HepG2 (cell line): ENCODE measurements at regions of chr22 and their contacts with region 1.

Region 1: GRCh38 chr22:33539902-33540751 is 380.1 kb downstream of the LARGE1 start:
- DNase-seq: peak; percentile 100
- ATAC-seq: peak; percentile 93
- H3K4me3 ChIP-seq: peak overlapping the region in 2 of 3 experiments; percentile 29 to 44; a peak in 2 of 6 replicates
- H3K27ac ChIP-seq: peak overlapping the region; percentile 99
- H3K4me1 ChIP-seq: peaks cover 86% of the 10 kb centered on the region
- H3K27me3 ChIP-seq: no peaks in the 10 kb centered on the region
- CTCF ChIP-seq: peak; percentile 1; the same call in 1 of the 2 replicates
- EP300 ChIP-seq: peak; percentile 97 to 99
- POLR2A ChIP-seq: peak in 1 of 2 experiments; percentile 78; a peak in 2 of 4 replicates
- RAD21 ChIP-seq: 0 out of 2 replicates have a peak, but pooled peaks have one; percentile 26

Region 2: DNA sequence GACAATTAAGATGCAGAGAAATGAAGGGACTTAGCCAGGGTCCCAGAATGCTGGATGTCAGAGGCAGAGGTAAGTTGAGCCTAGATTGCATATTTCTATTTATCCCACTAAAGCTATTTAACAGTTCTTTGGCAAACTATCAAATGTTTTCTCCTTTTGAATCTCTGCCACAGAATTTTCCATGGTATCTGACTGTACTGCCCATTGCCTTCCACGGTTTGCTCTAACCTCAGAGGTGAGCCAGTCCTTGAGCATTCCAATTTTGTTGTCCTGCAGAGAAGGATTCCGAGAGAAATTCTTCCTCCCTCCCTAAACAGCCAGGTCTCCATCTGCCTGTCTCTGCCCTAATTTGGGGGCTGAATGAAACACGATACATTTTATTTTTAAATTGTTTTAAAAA is 113.7 kb before region 1 on chr22:
- CTCF ChIA-PET with region 1: no interaction called
- POLR2A ChIA-PET with region 1: no interaction called
- in situ Hi-C with region 1: no loop called
- intact Hi-C with region 1: no loop called
- DNase-seq: no peak
- ATAC-seq: no peak
- H3K4me3 ChIP-seq: no peak overlapping the region
- H3K27ac ChIP-seq: no peak overlapping the region
- H3K4me1 ChIP-seq: peaks cover 9% of the 10 kb centered on the region
- H3K27me3 ChIP-seq: no peaks in the 10 kb centered on the region
- CTCF ChIP-seq: no peak
- EP300 ChIP-seq: no peak
- POLR2A ChIP-seq: no peak
- RAD21 ChIP-seq: no peak

Region 3: DNA sequence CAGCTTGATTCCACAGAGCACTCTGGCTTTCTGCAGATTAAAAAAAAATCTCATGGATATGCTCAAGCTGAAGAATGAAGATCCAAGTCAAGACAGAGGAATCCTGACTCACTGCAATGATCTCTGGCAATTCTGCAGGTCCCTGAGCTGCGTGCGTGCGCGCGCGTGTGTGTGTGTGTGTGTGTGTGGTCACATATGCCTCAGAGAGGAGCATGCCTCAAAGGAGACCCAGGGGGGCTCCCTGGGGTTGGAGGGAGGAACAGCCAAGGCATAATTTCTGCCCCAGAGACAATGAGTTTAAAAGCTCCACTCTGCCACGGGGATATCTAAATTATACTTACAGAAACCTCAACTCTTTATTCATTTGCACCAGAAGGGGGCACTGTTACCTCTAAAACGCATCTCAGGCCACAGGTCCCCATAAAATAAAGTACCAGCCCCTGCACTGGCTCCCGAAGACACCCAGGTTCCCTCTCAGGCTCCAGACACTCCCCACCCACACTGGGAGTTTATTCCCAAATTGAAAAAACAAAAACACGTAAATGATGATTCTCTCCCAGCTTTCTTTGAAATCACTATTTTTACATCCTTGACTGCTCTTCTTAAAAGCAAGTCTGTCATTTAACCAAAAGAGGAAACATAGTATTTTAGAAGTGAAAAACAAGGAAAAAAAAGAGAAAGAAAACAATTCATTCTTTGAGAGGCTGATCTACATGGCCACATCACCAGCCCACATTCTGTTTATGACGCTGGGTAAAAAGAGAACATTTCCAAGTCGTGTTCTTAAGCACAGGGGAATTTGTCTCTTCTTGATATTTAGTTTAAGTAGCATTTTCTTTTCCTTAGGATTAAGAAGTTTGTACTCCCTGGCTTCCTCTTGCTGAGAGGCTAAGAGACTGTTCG is 20.8 kb before region 1 on chr22:
- CTCF ChIA-PET with region 1: no interaction called
- POLR2A ChIA-PET with region 1: interaction called, 68 read pairs
- in situ Hi-C with region 1: no loop called
- intact Hi-C with region 1: no loop called
- DNase-seq: peak; percentile 73
- ATAC-seq: peak; percentile 77
- H3K4me3 ChIP-seq: no peak overlapping the region
- H3K27ac ChIP-seq: peak overlapping the region; percentile 51
- H3K4me1 ChIP-seq: peaks cover 91% of the 10 kb centered on the region
- H3K27me3 ChIP-seq: no peaks in the 10 kb centered on the region
- CTCF ChIP-seq: peak; percentile 79
- EP300 ChIP-seq: no peak
- POLR2A ChIP-seq: no peak
- RAD21 ChIP-seq: peak; percentile 90

Region 4: DNA sequence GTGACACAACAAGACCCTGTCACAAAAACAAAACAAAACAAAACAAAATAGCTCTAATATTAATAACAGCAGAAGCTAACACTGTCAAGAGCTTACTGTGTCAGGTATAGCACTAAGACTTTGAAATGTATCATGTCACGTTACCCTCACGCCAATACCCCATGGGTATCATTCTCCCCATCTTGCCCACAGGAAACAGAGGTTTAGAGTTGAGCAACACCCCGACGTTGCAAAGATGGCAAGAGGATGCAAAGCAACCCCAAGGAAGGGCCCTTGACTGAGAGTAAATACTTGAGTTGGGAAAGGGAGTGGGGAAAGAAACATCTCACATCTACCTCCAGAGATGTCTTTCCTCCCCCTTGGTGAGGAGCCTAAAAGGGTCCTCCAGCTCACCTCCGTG is 13.4 kb after region 1 on chr22:
- CTCF ChIA-PET with region 1: no interaction called
- POLR2A ChIA-PET with region 1: interaction called, 35 read pairs
- in situ Hi-C with region 1: no loop called
- intact Hi-C with region 1: loop called (anchors 1 kb)
- DNase-seq: no peak
- ATAC-seq: no peak
- H3K4me3 ChIP-seq: no peak overlapping the region
- H3K27ac ChIP-seq: no peak overlapping the region
- H3K4me1 ChIP-seq: peaks cover 34% of the 10 kb centered on the region
- H3K27me3 ChIP-seq: no peaks in the 10 kb centered on the region
- CTCF ChIP-seq: no peak
- EP300 ChIP-seq: no peak
- POLR2A ChIP-seq: no peak
- RAD21 ChIP-seq: no peak

Region 5: DNA sequence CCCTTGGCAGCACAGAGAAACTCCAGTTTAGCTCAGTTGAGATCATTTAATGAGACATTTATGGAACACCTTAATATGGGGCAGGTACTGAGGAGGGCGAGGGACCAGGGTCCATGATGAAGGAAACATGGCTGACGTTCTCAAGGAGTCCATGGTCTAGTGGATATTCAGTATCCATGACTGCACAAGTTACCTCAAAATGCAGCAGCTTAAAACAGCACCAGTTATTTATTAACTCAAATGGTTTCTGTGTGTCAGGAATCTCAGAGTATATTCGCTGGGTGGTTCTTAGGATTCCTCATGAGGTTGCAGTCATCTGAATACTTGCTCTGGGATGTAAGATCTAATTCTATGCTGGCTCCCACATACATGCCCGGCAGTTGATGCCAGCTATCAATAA is 33.4 kb after region 1 on chr22:
- CTCF ChIA-PET with region 1: interaction called, 6 read pairs
- POLR2A ChIA-PET with region 1: interaction called, 91 read pairs
- in situ Hi-C with region 1: loop called (anchors 5 kb)
- intact Hi-C with region 1: loop called (anchors 1 kb)
- DNase-seq: peak; percentile 57
- ATAC-seq: peak; percentile 52
- H3K4me3 ChIP-seq: peak overlapping the region; percentile 24 to 31 (median 31); a peak in 3 of 6 replicates
- H3K27ac ChIP-seq: peak overlapping the region; percentile 58
- H3K4me1 ChIP-seq: peaks cover 98% of the 10 kb centered on the region
- H3K27me3 ChIP-seq: no peaks in the 10 kb centered on the region
- CTCF ChIP-seq: no peak
- EP300 ChIP-seq: no peak
- POLR2A ChIP-seq: no peak
- RAD21 ChIP-seq: no peak

Region 6: GRCh38 chr22:33620085-33620484 is 80.0 kb after region 1 on chr22:
- CTCF ChIA-PET with region 1: no interaction called
- POLR2A ChIA-PET with region 1: no interaction called
- in situ Hi-C with region 1: no loop called
- intact Hi-C with region 1: no loop called
- DNase-seq: no peak
- ATAC-seq: no peak
- H3K4me3 ChIP-seq: no peak overlapping the region
- H3K27ac ChIP-seq: no peak overlapping the region
- H3K4me1 ChIP-seq: no peaks in the 10 kb centered on the region
- H3K27me3 ChIP-seq: no peaks in the 10 kb centered on the region
- CTCF ChIP-seq: no peak
- EP300 ChIP-seq: no peak
- POLR2A ChIP-seq: no peak
- RAD21 ChIP-seq: no peak

Region 7: DNA sequence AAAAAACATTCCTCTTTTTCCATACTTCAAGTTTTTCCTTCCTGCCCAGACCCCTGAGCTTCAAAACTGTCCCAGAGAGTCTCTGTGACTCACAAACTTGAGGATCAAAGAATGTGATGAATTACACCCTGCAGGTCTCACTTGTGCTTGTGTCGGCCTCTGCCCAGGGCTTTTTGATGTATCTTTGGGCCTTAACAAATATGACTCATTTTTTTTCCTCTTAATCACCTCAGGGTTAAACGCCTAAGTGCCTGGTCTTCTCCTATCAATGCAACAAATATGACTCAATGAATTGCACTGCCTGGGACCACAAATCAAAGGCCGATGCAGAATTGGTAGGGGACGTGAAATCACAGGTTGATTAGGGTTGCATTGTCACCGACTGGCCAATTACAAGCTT is 112.5 kb after region 1 on chr22:
- CTCF ChIA-PET with region 1: no interaction called
- POLR2A ChIA-PET with region 1: no interaction called
- in situ Hi-C with region 1: no loop called
- intact Hi-C with region 1: no loop called
- DNase-seq: peak; percentile 72
- ATAC-seq: peak; percentile 43; the same call in 2 of the 3 replicates
- H3K4me3 ChIP-seq: no peak overlapping the region
- H3K27ac ChIP-seq: no peak overlapping the region
- H3K4me1 ChIP-seq: peaks cover 24% of the 10 kb centered on the region
- H3K27me3 ChIP-seq: no peaks in the 10 kb centered on the region
- CTCF ChIP-seq: no peak
- EP300 ChIP-seq: no peak
- POLR2A ChIP-seq: no peak
- RAD21 ChIP-seq: no peak